ENCODE measurements at regions of chr2 and their contacts with region 1.

Region 1: DNA sequence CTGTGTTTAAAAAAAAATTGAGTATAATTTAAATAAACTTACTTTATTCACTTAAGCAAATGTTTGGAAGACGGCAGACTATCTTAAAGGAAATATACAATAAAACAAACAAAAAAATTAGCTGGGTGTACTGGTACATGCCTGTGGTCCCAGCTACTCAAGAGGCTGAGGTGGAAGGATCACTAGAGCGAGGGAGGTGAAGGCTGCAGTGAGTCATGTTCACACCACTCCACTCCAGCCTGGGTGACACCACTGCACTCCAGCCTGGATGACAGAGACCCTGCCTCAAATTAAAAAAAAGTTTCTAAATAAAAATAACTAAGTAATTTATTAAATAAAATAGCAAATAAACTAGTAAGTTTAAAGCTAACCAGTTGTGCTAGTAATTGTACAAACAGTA is 7.5 kb downstream of the PUM2 start:
- DNase-seq: no peak
- H3K4me3 ChIP-seq: no peak overlapping the region
- H3K27ac ChIP-seq: no peak overlapping the region
- H3K4me1 ChIP-seq: peaks cover 0 to 78% (median 24%) of the 10 kb centered on the region in 4 donors
- H3K27me3 ChIP-seq: no peaks in the 10 kb centered on the region
- CTCF ChIP-seq: no peak

Region 2: GRCh38 chr2:20242060-20243006 is 100.8 kb before region 1 on chr2:
- intact Hi-C with region 1: no loop called
- DNase-seq: no peak
- H3K4me3 ChIP-seq: no peak overlapping the region
- H3K27ac ChIP-seq: no peak overlapping the region
- H3K4me1 ChIP-seq: no peaks in the 10 kb centered on the region
- H3K27me3 ChIP-seq: peaks cover 0 to 18% of the 10 kb centered on the region in 2 donors
- CTCF ChIP-seq: peak in 1 of 2 experiments; percentile 22

Region 3: GRCh38 chr2:20291106-20291564 is 52.0 kb before region 1 on chr2:
- intact Hi-C with region 1: loop called (anchors 10 kb)
- DNase-seq: no peak
- H3K4me3 ChIP-seq: no peak overlapping the region
- H3K27ac ChIP-seq: no peak overlapping the region
- H3K4me1 ChIP-seq: no peaks in the 10 kb centered on the region
- H3K27me3 ChIP-seq: no peaks in the 10 kb centered on the region
- CTCF ChIP-seq: peak; percentile 30 to 47

Measured in tibial artery (tissue), 4 donors.